Activated B cell treated with CpG ODN at 0.5 μM for 24 hours (primary cell): ENCODE measurements at regions of chr12 and their contacts with region 1.

Region 1: GRCh38 chr12:49358483-49359141 is 8.7 kb upstream of the SPATS2 start:
- DNase-seq: no peak
- ATAC-seq: peak; percentile 96
- H3K4me3 Mint-ChIP-seq: no peak overlapping the region
- H3K27ac Mint-ChIP-seq: no peak overlapping the region
- H3K4me1 Mint-ChIP-seq: peaks cover 2% of the 10 kb centered on the region
- H3K27me3 Mint-ChIP-seq: peaks cover 13% of the 10 kb centered on the region
- CTCF ChIP-seq: no peak

Region 2: DNA sequence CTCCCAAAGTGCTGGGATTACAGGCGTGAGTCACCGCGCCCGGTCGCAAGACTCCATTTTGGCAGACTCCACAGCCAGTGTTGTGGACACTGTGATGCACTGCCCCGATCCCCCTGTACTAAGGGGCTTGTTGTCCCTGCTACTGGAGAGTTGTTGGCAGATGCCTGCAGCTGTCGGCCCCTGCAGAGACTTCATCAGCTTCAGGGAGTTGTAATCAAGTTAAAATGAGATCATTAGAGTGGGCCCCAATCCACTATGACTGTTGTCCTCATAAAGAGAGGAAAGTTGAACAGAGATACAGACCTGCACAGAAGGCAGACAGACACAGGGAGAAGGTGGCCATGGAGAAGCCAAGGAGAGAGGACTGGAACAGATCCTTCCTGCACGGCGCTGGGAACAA is 146.0 kb before region 1 on chr12:
- CTCF ChIA-PET with region 1: no interaction called
- POLR2A ChIA-PET with region 1: no interaction called
- intact Hi-C with region 1: no loop called
- DNase-seq: no peak
- ATAC-seq: no peak
- H3K4me3 Mint-ChIP-seq: no peak overlapping the region
- H3K27ac Mint-ChIP-seq: no peak overlapping the region
- H3K4me1 Mint-ChIP-seq: no peaks in the 10 kb centered on the region
- H3K27me3 Mint-ChIP-seq: no peaks in the 10 kb centered on the region
- CTCF ChIP-seq: no peak

Region 3: DNA sequence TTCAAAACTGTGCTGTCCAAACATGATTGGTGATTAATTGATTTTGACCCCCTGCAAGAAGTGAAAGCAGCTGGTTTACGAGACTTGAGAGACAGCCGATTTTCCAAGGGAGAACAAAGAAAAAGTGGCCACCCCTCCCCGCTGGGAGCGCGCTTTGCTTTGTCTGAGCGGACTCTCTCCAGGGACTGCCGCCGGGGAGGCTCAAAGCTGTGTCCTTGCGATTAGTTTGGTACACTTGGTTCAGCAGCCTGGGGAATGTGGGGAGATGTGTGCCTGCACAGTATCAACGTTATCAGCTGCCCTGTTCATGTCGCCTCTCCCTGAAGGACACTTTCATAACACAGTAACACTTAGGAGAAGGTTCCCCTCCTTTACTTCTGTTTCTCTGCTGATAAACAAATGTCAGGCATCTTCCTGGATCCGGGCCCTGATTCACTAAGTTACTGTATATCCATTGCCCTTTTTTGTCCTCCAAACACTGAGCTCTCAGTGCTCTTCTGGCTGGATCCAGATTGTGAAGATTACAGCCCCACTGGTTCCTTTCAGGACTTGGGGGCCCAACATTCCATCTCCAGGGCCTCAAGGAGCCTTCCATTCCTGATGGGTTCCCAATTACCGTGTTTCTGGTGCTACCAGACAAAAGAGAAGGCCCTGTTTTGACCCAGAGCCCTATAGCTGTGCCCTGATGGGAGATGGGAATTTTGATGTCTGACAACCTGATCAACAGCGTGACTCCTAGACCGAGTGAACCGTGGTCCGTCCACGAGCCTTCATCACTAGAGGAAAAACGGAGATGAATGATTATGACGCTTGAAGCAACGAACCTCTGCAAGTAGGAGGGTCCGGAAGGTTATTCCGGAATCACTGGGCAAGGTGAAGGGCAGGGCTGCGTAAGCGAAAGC is 125.4 kb before region 1 on chr12:
- CTCF ChIA-PET with region 1: no interaction called
- POLR2A ChIA-PET with region 1: no interaction called
- intact Hi-C with region 1: no loop called
- DNase-seq: no peak
- ATAC-seq: no peak
- H3K4me3 Mint-ChIP-seq: peak overlapping the region; percentile 93
- H3K27ac Mint-ChIP-seq: peak overlapping the region; percentile 89
- H3K4me1 Mint-ChIP-seq: peaks cover 15% of the 10 kb centered on the region
- H3K27me3 Mint-ChIP-seq: no peaks in the 10 kb centered on the region
- CTCF ChIP-seq: no peak

Region 4: DNA sequence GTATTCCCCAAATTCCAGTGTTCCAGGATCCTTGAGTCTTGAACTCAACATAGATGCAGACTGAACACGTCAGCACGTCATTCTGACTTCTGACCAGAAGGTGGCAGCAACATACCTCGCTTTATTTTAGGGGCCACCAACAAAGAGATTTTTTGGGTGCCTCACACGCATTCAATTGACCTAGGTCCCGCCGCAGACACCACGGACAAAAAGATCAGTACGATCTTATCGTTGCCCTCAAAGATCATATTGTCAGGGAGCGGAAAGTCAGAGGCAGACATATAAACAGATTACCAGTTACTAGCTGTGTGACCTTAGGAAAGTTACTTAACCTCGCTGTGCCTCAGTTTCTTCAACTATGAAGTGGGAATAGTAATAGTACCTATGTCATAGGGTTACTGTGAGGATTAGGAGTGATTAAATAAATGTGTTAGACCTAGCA is 70.2 kb before region 1 on chr12:
- CTCF ChIA-PET with region 1: interaction called, 56 read pairs
- POLR2A ChIA-PET with region 1: no interaction called
- intact Hi-C with region 1: loop called (anchors 1 kb)
- DNase-seq: peak; percentile 41
- ATAC-seq: peak; percentile 72
- H3K4me3 Mint-ChIP-seq: no peak overlapping the region
- H3K27ac Mint-ChIP-seq: no peak overlapping the region
- H3K4me1 Mint-ChIP-seq: no peaks in the 10 kb centered on the region
- H3K27me3 Mint-ChIP-seq: peaks cover 32% of the 10 kb centered on the region
- CTCF ChIP-seq: peak; percentile 27

Region 5: DNA sequence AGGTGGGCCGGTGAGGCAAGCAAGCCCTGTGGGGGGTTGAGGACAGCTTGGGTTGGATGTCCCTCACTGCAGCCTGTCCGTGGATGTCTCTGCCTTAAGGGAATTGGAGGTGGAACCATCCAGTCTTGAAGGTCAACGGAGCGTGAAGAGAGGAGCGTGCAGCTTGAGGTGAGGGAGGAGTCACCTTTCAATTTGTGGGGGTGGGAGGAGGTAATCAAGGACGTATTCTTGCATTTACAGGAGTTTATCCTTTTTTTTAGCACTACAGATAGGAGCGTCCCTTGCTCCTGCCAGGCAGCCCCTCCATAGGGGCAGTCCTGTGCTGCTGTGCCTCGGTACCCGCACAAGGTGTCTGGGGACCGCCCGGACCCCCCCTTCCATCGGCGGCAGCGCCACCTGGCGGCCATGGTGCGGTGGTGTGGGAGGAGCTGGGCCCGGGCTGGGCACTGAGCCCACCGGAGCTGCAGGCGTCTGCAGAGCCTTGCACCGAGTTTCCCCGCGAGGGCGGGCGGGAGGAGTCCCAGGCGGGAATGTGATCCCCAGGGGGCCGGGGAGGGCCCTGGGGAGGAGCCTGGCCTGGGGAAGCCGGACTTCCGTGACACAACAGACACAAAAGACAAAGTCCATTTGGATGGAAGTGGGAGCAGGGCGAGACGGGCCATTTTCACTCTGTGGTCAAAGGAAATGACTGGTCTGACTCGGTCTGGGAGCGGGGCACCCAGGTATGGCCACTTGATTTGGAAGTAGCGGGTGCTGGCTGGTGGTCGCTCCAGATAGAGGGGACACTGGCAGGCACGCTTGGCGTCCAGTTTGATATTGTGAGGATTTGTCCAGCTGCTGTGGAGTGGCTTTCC is 11.0 kb before region 1 on chr12:
- CTCF ChIA-PET with region 1: interaction called, 41 read pairs
- POLR2A ChIA-PET with region 1: interaction called, 6 read pairs
- intact Hi-C with region 1: no loop called
- DNase-seq: peak; percentile 78
- ATAC-seq: peak; percentile 69
- H3K4me3 Mint-ChIP-seq: peak overlapping the region; percentile 79
- H3K27ac Mint-ChIP-seq: no peak overlapping the region
- H3K4me1 Mint-ChIP-seq: peaks cover 46% of the 10 kb centered on the region
- H3K27me3 Mint-ChIP-seq: peaks cover 49% of the 10 kb centered on the region
- CTCF ChIP-seq: peak; percentile 97

Region 6: GRCh38 chr12:49515266-49515665 is 156.7 kb after region 1 on chr12:
- CTCF ChIA-PET with region 1: interaction called, 345 read pairs
- POLR2A ChIA-PET with region 1: interaction called, 13 read pairs
- intact Hi-C with region 1: loop called (anchors 1 kb)
- DNase-seq: no peak
- ATAC-seq: no peak
- H3K4me3 Mint-ChIP-seq: no peak overlapping the region
- H3K27ac Mint-ChIP-seq: no peak overlapping the region
- H3K4me1 Mint-ChIP-seq: no peaks in the 10 kb centered on the region
- H3K27me3 Mint-ChIP-seq: no peaks in the 10 kb centered on the region
- CTCF ChIP-seq: no peak

Region 7: GRCh38 chr12:49580572-49581535 is 222.2 kb after region 1 on chr12:
- CTCF ChIA-PET with region 1: interaction called, 25 read pairs
- POLR2A ChIA-PET with region 1: no interaction called
- intact Hi-C with region 1: loop called (anchors 1 kb)
- DNase-seq: no peak
- ATAC-seq: peak; percentile 62
- H3K4me3 Mint-ChIP-seq: no peak overlapping the region
- H3K27ac Mint-ChIP-seq: no peak overlapping the region
- H3K4me1 Mint-ChIP-seq: peaks cover 11% of the 10 kb centered on the region
- H3K27me3 Mint-ChIP-seq: no peaks in the 10 kb centered on the region
- CTCF ChIP-seq: no peak